CD4-positive, alpha-beta memory T cell (primary cell): ENCODE measurements at regions of chr2 and their contacts with region 1.

Region 1: GRCh38 chr2:160429248-160430000 is 64.2 kb downstream of the RBMS1 start:
- DNase-seq: peak in 4 of 5 donors; percentile 54 to 65 (median 60)
- H3K4me3 ChIP-seq: no peak overlapping the region
- H3K4me3 Mint-ChIP-seq: peak overlapping the region in 2 of 8 donors; percentile 28 to 56
- H3K27ac ChIP-seq: peak overlapping the region; percentile 17
- H3K27ac Mint-ChIP-seq: peak overlapping the region; percentile 77 to 92 (median 87)
- H3K4me1 ChIP-seq: peaks cover 58% of the 10 kb centered on the region
- H3K4me1 Mint-ChIP-seq: peaks cover 40 to 79% (median 59%) of the 10 kb centered on the region in 4 donors
- H3K27me3 ChIP-seq: no peaks in the 10 kb centered on the region
- H3K27me3 Mint-ChIP-seq: no peaks in the 10 kb centered on the region

Region 2: GRCh38 chr2:160353166-160353565 is 76.3 kb before region 1 on chr2:
- CTCF ChIA-PET with region 1: interaction called, 17 read pairs
- POLR2A ChIA-PET with region 1: no interaction called
- intact Hi-C with region 1: no loop called
- DNase-seq: peak in 4 of 5 donors; percentile 26 to 37 (median 32)
- H3K4me3 ChIP-seq: no peak overlapping the region
- H3K4me3 Mint-ChIP-seq: peak overlapping the region in 2 of 8 donors; percentile 4 to 45
- H3K27ac ChIP-seq: no peak overlapping the region
- H3K27ac Mint-ChIP-seq: peak overlapping the region in 2 of 7 donors; percentile 44 to 67
- H3K4me1 ChIP-seq: peaks cover 27% of the 10 kb centered on the region
- H3K4me1 Mint-ChIP-seq: peaks cover 50 to 87% (median 73%) of the 10 kb centered on the region in 4 donors
- H3K27me3 ChIP-seq: no peaks in the 10 kb centered on the region
- H3K27me3 Mint-ChIP-seq: no peaks in the 10 kb centered on the region

Region 3: DNA sequence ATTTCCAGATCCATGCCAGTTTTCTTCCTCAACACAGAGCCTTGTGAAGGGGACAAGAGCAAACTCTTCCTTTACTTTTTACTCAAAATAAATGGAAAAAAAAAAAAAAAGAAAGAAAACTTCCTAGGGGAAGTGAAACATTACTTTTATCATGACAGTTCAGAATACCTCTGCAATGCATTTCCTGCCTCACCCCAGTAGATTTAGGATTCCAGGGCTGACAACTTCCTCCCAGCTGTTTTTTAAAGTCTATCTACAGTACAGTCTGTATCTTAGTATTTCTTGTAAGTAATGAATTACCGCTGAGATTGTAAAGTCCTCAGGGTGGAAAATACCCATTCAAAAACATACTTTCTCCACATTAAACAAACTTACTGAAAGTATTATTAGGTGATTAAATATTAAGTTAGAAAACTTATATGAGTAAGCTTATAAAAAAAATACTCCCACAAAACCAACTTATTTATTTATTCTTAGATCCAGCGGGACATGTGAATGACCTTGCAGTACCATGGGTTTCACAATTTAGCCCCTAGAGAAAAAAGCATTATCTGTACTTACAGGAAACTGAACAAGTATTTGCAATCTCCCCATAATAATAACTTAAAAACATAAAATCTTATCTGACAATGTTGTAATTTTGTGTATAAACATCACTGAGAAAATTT is 53.5 kb before region 1 on chr2:
- CTCF ChIA-PET with region 1: interaction called, 11 read pairs
- POLR2A ChIA-PET with region 1: interaction called, 5 read pairs
- intact Hi-C with region 1: no loop called
- DNase-seq: peak in 2 of 5 donors; percentile 10 to 14
- H3K4me3 ChIP-seq: no peak overlapping the region
- H3K4me3 Mint-ChIP-seq: peak overlapping the region in 5 of 8 donors; percentile 9 to 64 (median 26)
- H3K27ac ChIP-seq: no peak overlapping the region
- H3K27ac Mint-ChIP-seq: peak overlapping the region in 3 of 7 donors; percentile 10 to 13 (median 10)
- H3K4me1 ChIP-seq: peaks cover 86% of the 10 kb centered on the region
- H3K4me1 Mint-ChIP-seq: peaks cover 70 to 96% (median 86%) of the 10 kb centered on the region in 4 donors
- H3K27me3 ChIP-seq: no peaks in the 10 kb centered on the region
- H3K27me3 Mint-ChIP-seq: no peaks in the 10 kb centered on the region

Region 4: DNA sequence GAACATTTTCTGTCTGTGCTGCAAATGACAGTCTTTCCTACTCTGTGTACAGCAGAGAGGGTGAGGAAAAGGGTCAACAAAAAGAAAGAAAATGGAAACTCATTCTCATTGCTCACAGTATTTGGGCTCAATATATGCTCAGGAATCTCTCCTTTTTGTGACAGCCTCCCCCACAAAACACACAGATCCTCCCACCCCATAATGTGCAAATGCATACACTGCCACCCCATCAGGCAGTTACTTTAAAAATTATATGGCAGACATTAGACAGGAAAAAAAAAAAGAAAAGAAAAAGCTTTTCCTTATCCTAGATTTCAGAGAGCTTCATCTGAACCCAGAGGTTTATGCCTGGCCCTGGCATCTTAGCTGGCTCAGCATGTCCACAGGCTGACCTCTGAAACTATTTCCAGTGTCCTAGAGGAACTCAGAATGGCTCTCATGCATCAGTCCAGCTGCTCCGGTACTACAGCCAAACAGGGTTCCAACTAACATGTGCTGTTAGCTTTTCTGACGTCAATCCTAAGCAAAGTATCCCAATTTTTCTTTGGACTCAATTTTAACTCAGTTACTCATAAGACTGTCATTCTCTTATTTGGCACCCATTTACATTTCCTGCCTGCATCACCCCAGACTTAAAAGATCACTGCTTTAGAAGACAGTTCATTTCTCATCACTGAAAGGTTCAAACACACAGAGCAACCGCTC is 41.7 kb before region 1 on chr2:
- CTCF ChIA-PET with region 1: interaction called, 14 read pairs
- POLR2A ChIA-PET with region 1: interaction called, 4 read pairs
- intact Hi-C with region 1: loop called (anchors 2 kb)
- DNase-seq: no peak
- H3K4me3 ChIP-seq: no peak overlapping the region
- H3K4me3 Mint-ChIP-seq: peak overlapping the region in 7 of 8 donors; percentile 66 to 89 (median 78)
- H3K27ac ChIP-seq: no peak overlapping the region
- H3K27ac Mint-ChIP-seq: peak overlapping the region; percentile 52 to 91 (median 67)
- H3K4me1 ChIP-seq: peaks cover 85% of the 10 kb centered on the region
- H3K4me1 Mint-ChIP-seq: peaks cover 62 to 95% (median 78%) of the 10 kb centered on the region in 4 donors
- H3K27me3 ChIP-seq: no peaks in the 10 kb centered on the region
- H3K27me3 Mint-ChIP-seq: no peaks in the 10 kb centered on the region

Region 5: DNA sequence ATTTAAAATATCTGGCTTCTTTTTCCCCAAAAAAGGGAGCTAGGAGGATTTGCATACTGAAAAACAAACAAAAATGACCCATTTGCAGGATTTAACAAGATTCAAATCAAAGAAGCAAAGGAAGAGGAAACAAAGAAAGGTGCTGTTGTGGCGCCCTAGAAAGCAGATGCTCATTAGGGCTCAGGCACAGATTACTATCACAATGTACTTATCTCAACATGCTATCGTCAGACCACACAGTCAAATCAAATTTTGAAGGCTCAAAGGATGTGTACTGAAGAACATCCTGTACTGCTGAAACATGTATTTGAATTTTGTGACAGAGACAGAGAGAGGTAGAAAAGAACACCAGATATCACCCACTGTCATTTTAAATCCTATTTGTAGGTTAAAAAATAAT is 53.2 kb after region 1 on chr2:
- CTCF ChIA-PET with region 1: interaction called, 4 read pairs
- POLR2A ChIA-PET with region 1: interaction called, 6 read pairs
- intact Hi-C with region 1: loop called (anchors 2 kb)
- DNase-seq: peak; percentile 68 to 82 (median 77)
- H3K4me3 ChIP-seq: no peak overlapping the region
- H3K4me3 Mint-ChIP-seq: peak overlapping the region in 7 of 8 donors; percentile 53 to 84 (median 77)
- H3K27ac ChIP-seq: peak overlapping the region; percentile 39
- H3K27ac Mint-ChIP-seq: peak overlapping the region; percentile 84 to 94 (median 92)
- H3K4me1 ChIP-seq: peaks cover 77% of the 10 kb centered on the region
- H3K4me1 Mint-ChIP-seq: peaks cover 51 to 87% (median 67%) of the 10 kb centered on the region in 4 donors
- H3K27me3 ChIP-seq: no peaks in the 10 kb centered on the region
- H3K27me3 Mint-ChIP-seq: no peaks in the 10 kb centered on the region

Region 6: DNA sequence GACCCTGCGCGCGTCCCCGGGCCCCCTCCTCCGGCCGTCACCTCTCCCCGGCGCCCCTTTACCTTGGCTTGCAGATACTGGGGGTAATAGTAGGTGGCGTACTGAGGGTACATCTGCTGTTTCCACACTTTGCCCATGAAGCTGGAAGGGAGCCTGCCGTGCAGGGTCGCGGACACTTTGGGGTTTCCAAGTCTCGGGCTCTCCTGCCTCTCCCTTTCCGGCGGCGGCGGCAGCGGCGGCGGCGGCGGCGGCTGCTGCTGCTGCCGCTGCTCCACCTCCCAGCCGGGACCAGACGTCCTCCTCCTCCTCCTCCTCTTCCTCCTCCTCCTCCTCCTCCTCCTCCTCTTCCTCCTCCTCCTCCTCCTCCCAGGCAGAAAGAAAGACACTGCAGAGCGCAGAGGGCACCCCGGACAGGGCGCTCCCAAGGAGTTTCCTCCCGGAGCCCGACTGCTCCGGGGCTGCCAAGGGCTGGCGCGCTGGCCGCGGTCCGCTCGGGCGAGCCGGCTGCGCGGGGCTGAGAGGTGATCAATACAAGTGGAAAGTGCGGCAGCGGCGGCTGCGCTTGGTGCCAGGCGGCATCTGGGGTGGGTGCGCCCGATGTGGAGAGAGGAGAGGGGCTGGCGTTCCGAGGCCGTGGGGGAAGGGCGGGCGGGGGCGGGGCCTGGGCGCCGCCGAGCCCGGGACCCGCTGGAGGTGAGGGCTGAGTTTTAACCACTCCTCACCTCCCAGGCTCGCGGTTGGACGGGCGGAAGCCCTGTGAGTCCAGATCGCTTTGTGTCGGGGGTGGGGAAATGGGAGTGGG is 64.0 kb after region 1 on chr2 and contains the start of gene RBMS1:
- CTCF ChIA-PET with region 1: interaction called, 5 read pairs
- POLR2A ChIA-PET with region 1: interaction called, 9 read pairs
- intact Hi-C with region 1: loop called (anchors 1 kb)
- DNase-seq: peak; percentile 47 to 69 (median 51)
- H3K4me3 ChIP-seq: peak within 1 kb of the TSS; percentile 49 to 64
- H3K4me3 Mint-ChIP-seq: peak within 1 kb of the TSS; percentile 91 to 98 (median 95)
- H3K27ac ChIP-seq: peak within 1 kb of the TSS; percentile 81
- H3K27ac Mint-ChIP-seq: peak within 1 kb of the TSS; percentile 85 to 97 (median 90)
- H3K4me1 ChIP-seq: peaks cover 43% of the 10 kb centered on the region
- H3K4me1 Mint-ChIP-seq: peaks cover 21 to 46% (median 32%) of the 10 kb centered on the region in 4 donors
- H3K27me3 ChIP-seq: no peaks in the 10 kb centered on the region
- H3K27me3 Mint-ChIP-seq: no peaks in the 10 kb centered on the region
- total RNA-seq, gene RBMS1: 101 to 103 TPM

Region 7: DNA sequence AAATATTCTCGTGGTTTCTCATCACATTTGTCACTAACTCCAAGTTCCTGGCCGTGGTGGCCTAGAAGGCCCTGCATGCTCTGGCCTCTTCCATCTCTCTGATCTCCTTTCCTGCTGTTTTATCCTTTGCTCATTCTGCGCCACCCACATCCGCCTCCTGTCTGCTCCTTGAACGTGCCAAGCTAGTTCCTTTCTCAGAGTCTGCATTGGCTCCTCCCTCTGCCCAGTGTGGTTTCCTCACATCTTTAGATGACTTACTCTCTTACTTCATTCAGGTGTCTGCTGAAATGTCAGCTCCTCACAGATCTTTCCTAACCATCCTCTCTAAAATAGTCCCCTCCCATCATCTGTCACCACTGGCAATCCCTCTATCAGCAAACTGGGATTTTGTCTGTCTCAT is 222.8 kb after region 1 on chr2:
- CTCF ChIA-PET with region 1: no interaction called
- POLR2A ChIA-PET with region 1: interaction called, 3 read pairs
- intact Hi-C with region 1: loop called (anchors 1 kb)
- DNase-seq: peak; percentile 61 to 79 (median 71)
- H3K4me3 ChIP-seq: no peak overlapping the region
- H3K4me3 Mint-ChIP-seq: peak overlapping the region in 7 of 8 donors; percentile 14 to 82 (median 61)
- H3K27ac ChIP-seq: no peak overlapping the region
- H3K27ac Mint-ChIP-seq: peak overlapping the region in 5 of 7 donors; percentile 6 to 77 (median 30)
- H3K4me1 ChIP-seq: peaks cover 22% of the 10 kb centered on the region
- H3K4me1 Mint-ChIP-seq: peaks cover 9 to 23% (median 21%) of the 10 kb centered on the region in 4 donors
- H3K27me3 ChIP-seq: no peaks in the 10 kb centered on the region
- H3K27me3 Mint-ChIP-seq: peaks cover 0 to 7% of the 10 kb centered on the region in 2 donors